ENCODE measurements at regions of chr10 and their contacts with region 1.

Region 1: GRCh38 chr10:113563306-113564088 is 10.6 kb downstream of the HABP2 start:
- DNase-seq: peak; percentile 87
- CTCF ChIP-seq: peak; percentile 99

Region 2: DNA sequence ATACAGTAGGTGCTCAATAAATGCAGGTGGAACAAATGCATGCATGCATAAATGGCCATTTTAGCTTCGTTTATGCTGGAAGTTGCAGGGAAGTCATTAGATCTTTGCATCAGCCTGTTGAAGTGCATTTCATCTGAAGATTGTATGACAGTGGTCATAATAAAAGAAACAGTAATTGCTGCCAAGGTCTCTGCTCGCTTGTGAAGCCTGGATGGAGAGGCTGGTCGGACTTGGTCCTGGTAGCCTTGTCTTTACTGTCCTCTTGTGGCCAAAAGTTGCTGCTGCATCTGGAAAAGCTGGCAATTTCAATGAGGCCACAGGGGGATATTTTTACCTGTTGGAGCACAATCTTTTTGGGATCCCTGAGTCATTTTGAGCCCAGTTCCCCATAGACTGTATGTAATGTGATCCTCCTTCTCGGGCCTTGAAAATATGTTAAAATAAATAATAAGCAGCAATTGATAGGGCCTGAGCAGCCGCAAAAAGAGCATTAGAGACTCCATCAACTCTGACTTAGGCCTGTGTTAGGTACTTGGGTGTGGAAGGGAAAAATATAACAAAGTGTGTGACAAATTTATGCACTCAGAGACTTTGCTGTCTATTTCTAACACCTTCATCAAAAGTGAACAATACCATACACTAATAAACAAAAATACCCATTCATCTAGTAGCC is 42.2 kb before region 1 on chr10:
- CTCF ChIA-PET with region 1: interaction called, 14 read pairs
- POLR2A ChIA-PET with region 1: no interaction called
- DNase-seq: peak; percentile 66
- CTCF ChIP-seq: peak; percentile 92

Region 3: GRCh38 chr10:113552701-113553100 is 10.8 kb before region 1 on chr10 and contains the start of gene HABP2:
- CTCF ChIA-PET with region 1: interaction called, 21 read pairs
- POLR2A ChIA-PET with region 1: no interaction called
- DNase-seq: no peak
- CTCF ChIP-seq: no peak

Region 4: GRCh38 chr10:113788604-113789083 is 225.1 kb after region 1 on chr10:
- CTCF ChIA-PET with region 1: no interaction called
- POLR2A ChIA-PET with region 1: no interaction called
- DNase-seq: peak; percentile 30
- CTCF ChIP-seq: no peak

Region 5: DNA sequence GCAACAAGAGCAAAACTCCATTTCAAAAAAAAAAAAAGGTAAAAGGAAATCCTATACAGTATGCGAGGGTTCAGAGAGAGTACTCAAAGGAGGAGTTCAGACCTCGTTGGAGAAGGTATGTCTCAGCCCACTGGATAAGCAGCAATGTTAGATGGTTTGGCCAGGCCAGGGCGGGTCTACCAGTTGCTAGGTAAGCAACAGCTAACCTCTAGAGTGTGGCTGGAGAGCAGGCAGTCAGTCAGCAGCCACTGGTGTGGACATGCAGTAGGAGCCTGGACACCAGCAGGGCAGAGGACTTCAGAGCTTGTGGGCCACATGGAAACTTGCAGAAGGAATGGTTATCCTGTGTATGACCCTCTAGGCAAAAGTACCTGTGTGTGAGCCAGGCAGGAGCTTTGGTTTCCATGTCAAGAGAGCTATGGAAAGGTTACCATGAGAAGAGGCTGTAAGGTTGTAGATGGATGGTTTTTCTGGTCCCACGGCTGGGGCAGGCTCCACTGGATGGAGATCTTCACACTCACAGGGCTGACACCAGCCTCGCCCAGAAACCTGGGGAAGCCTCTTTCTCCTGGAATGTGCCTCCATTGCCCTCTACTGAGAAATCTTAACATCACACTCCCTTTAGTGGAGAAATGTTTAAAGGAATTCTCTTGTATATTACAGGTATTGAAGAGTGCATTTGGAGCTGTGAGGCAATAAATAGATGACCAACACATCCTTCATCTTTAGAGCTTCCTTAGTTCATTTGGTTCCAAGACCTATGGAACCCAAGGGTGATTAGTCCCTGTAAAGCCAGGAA is 546.9 kb after region 1 on chr10:
- CTCF ChIA-PET with region 1: no interaction called
- POLR2A ChIA-PET with region 1: no interaction called
- DNase-seq: no peak
- CTCF ChIP-seq: no peak

Measured in GM10248 (cell line).